Calu3 (cell line): ENCODE measurements at regions of chr17 and their contacts with region 1.

Region 1: DNA sequence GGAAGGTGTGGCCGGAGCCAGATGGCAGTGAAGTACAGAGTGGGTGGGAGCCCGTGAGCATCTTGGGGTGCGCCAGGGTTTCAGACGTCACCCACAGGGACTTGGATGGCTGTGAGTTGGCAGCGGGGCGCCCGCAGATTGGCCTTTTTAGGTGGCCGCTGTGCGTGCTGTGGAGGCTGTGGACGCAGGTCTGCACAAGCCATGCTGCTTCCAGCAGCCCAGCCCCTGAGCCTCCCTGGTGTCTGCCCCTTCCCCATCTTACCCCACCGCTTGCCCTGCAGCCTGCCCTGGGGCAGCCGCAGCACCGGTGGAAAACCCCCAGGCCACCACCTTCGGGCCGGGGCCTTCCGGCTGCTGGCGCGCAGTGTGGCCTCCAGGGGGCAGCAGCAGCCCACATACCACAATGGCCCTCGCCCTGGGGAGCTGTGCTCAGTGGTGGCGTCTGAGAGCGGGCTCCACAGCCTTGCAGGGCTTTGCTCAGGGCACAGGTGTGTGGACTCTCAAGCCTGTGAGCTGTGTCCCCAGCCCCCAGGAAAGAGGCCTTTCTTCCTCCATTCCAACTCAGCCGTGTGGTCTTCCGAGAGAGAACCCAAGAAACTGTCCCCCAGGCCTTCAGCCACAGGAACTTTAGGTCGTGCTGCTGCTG is 11.8 kb downstream of the ENDOV start:
- DNase-seq: peak; percentile 86
- H3K4me3 Mint-ChIP-seq: no peak overlapping the region
- H3K27ac Mint-ChIP-seq: no peak overlapping the region
- H3K4me1 Mint-ChIP-seq: no peaks in the 10 kb centered on the region
- H3K27me3 Mint-ChIP-seq: no peaks in the 10 kb centered on the region
- CTCF ChIP-seq: peak; percentile 95

Region 2: DNA sequence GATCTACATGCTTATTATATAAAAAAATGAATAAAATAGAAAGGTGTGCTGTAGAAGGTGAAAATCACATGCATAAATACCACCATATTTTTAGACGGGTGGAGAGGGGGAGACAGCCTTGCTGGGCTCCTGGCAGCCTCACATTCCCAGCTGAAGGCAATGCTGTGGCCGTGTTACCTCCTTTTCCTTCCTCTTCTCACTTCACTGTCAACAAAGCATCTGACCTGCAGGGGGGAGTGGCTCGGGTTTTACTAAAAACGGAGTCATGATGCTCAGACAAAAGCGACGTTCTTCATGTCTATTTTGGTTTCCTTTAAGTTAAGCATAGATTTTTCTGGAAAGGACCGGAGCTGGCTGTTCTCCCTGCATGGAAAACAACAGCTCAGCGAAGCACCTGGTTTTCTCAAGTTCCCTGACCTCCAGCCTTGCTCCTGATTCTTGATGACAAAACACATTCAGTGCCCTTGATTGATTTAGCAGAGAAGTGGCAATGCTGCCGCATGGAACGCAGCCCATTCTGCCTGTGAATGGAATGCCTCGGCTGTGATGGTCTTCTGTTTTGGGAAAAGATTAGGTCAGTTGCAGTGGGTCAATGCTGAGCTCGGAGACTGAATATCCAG is 112.3 kb after region 1 on chr17:
- CTCF ChIA-PET with region 1: interaction called, 11 read pairs
- intact Hi-C with region 1: no loop called
- DNase-seq: no peak
- H3K4me3 Mint-ChIP-seq: no peak overlapping the region
- H3K27ac Mint-ChIP-seq: no peak overlapping the region
- H3K4me1 Mint-ChIP-seq: no peaks in the 10 kb centered on the region
- H3K27me3 Mint-ChIP-seq: no peaks in the 10 kb centered on the region
- CTCF ChIP-seq: no peak

Region 3: DNA sequence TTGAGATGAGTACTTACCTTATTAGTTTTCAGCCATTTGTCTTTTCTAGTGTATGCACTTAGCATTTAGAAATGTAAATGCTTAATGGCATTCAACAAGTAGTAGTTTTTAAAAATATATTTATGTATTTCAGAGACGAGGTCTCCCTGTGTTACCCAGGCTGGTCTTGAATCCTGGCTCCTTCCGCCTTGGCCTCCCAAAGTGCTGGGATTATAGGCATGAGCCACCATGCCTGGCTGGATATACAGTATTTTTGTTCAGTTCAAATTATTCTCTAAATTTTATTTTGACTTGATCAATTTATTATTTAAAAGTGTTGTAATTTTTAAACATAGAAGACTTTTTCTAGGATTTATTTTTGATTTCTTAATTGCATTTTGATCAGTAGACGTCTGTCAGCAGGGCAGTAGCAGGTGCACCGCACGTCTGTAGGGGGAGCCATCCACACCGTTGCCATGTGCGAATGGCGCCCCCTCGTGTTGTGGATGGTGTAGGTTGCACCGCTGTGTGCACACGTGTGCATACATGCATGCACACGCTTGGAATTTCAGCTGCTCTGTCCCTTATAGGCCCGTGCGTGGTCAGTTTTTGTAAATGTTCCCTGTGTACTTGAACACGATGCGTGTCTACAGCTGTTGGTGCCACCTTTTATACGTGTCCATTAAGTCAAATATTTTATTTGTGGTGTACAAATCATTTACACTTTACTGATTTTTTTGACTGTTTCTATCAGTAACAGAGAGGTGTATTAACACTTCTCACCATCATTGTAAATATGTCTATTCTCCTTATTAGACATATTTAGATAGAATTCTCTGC is 148.5 kb after region 1 on chr17:
- CTCF ChIA-PET with region 1: interaction called, 5 read pairs
- intact Hi-C with region 1: loop called (anchors 2 kb)
- DNase-seq: peak; percentile 95
- H3K4me3 Mint-ChIP-seq: no peak overlapping the region
- H3K27ac Mint-ChIP-seq: no peak overlapping the region
- H3K4me1 Mint-ChIP-seq: peaks cover 10% of the 10 kb centered on the region
- H3K27me3 Mint-ChIP-seq: no peaks in the 10 kb centered on the region
- CTCF ChIP-seq: peak; percentile 100

Region 4: GRCh38 chr17:80981062-80981902 is 554.5 kb after region 1 on chr17:
- CTCF ChIA-PET with region 1: no interaction called
- intact Hi-C with region 1: loop called (anchors 2 kb)
- DNase-seq: peak; percentile 43
- H3K4me3 Mint-ChIP-seq: peak overlapping the region; percentile 27
- H3K27ac Mint-ChIP-seq: no peak overlapping the region
- H3K4me1 Mint-ChIP-seq: peaks cover 13% of the 10 kb centered on the region
- H3K27me3 Mint-ChIP-seq: peaks cover 60% of the 10 kb centered on the region
- CTCF ChIP-seq: peak; percentile 89